Mammary epithelial cell (primary cell): ENCODE measurements at regions of chr4 and their contacts with region 1.

Region 1: GRCh38 chr4:20422398-20422797 is 170.7 kb downstream of the SLIT2 start:
- DNase-seq: peak; percentile 31
- H3K4me3 ChIP-seq: no peak overlapping the region
- H3K27ac ChIP-seq: no peak overlapping the region
- H3K4me1 ChIP-seq: no peaks in the 10 kb centered on the region
- H3K27me3 ChIP-seq: no peaks in the 10 kb centered on the region
- CTCF ChIP-seq: peak; percentile 32 to 63

Region 2: DNA sequence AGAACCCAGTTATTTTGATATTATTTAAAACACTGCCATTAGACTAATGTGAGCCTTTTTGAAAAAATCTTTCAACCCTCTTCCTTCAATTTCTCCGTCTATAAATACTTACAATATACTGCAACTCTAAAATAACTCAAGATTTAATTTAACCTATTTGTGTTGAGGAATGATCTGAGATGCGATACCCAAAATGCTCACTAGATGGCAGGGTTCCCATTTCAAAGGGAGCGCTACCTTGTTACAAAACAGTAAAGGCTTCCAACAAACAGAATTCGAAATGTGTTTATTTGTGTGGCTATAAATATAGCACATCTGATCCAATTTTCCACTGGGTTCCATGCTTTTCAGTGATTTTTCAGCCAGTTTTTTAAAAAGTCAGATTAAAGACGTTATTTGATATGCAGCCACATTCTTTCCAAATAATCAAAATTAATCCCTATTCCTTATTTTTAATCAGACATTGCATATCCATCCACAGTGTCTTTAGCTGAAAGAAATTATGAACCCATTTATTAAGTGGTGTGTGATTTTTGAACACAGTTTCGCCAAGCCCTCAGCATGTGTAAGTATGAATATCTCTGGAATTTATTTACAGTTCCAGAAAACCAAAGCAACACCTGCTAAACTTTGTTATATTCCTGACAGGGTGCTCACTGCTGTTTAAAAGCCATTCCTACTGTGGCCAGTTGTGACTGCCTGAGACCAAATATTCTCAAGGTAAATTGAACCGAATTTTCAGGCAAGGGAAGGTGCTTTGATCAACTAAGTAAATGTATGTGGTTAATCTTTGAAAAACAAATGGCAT is 1732.9 kb before region 1 on chr4:
- CTCF ChIA-PET with region 1: no interaction called
- dilution Hi-C with region 1: no loop called
- in situ Hi-C with region 1: no loop called
- intact Hi-C with region 1: loop called (anchors 10 kb)
- DNase-seq: peak; percentile 28
- H3K4me3 ChIP-seq: no peak overlapping the region
- H3K27ac ChIP-seq: no peak overlapping the region
- H3K4me1 ChIP-seq: no peaks in the 10 kb centered on the region
- H3K27me3 ChIP-seq: no peaks in the 10 kb centered on the region
- CTCF ChIP-seq: peak; percentile 79 to 83

Region 3: GRCh38 chr4:19309378-19309777 is 1113.0 kb before region 1 on chr4:
- CTCF ChIA-PET with region 1: no interaction called
- dilution Hi-C with region 1: no loop called
- in situ Hi-C with region 1: no loop called
- intact Hi-C with region 1: loop called (anchors 10 kb)
- DNase-seq: peak; percentile 14
- H3K4me3 ChIP-seq: no peak overlapping the region
- H3K27ac ChIP-seq: no peak overlapping the region
- H3K4me1 ChIP-seq: no peaks in the 10 kb centered on the region
- H3K27me3 ChIP-seq: no peaks in the 10 kb centered on the region
- CTCF ChIP-seq: peak; percentile 21 to 61

Region 4: DNA sequence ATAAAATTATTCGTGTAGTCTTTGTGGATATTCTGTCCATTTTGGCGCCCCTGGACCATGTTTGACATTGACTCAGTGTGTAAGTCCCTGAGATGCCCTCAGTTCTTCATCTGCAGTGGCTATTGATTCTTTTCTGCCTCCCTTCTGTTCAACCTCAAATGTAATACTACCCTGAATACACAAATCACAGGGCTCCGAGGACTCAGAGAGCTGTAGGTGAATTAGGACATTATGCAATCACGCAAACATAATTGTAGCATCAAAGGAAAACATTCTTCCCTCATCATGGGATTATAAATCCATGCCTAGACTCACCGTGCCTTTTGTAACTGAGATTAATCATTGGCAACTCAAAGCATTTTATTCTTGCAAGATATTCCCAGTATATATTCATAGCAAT is 116.5 kb after region 1 on chr4:
- CTCF ChIA-PET with region 1: no interaction called
- dilution Hi-C with region 1: no loop called
- in situ Hi-C with region 1: loop called in 1 of 2 experiments (anchors 5 kb)
- intact Hi-C with region 1: loop called (anchors 1 kb)
- DNase-seq: no peak
- H3K4me3 ChIP-seq: no peak overlapping the region
- H3K27ac ChIP-seq: no peak overlapping the region
- H3K4me1 ChIP-seq: no peaks in the 10 kb centered on the region
- H3K27me3 ChIP-seq: no peaks in the 10 kb centered on the region
- CTCF ChIP-seq: no peak

Region 5: GRCh38 chr4:20544645-20545044 is 122.2 kb after region 1 on chr4:
- CTCF ChIA-PET with region 1: no interaction called
- dilution Hi-C with region 1: no loop called
- in situ Hi-C with region 1: loop called (anchors 5 kb)
- intact Hi-C with region 1: loop called (anchors 1 kb)
- DNase-seq: peak; percentile 13
- H3K4me3 ChIP-seq: no peak overlapping the region
- H3K27ac ChIP-seq: no peak overlapping the region
- H3K4me1 ChIP-seq: no peaks in the 10 kb centered on the region
- H3K27me3 ChIP-seq: no peaks in the 10 kb centered on the region
- CTCF ChIP-seq: peak; percentile 47 to 70

Region 6: GRCh38 chr4:20684852-20685763 is 262.7 kb after region 1 on chr4:
- CTCF ChIA-PET with region 1: no interaction called
- dilution Hi-C with region 1: loop called (anchors 25 kb)
- in situ Hi-C with region 1: loop called (anchors 5 kb)
- intact Hi-C with region 1: loop called (anchors 1 kb)
- DNase-seq: no peak
- H3K4me3 ChIP-seq: no peak overlapping the region
- H3K27ac ChIP-seq: no peak overlapping the region
- H3K4me1 ChIP-seq: no peaks in the 10 kb centered on the region
- H3K27me3 ChIP-seq: no peaks in the 10 kb centered on the region
- CTCF ChIP-seq: peak; percentile 41 to 54

Region 7: DNA sequence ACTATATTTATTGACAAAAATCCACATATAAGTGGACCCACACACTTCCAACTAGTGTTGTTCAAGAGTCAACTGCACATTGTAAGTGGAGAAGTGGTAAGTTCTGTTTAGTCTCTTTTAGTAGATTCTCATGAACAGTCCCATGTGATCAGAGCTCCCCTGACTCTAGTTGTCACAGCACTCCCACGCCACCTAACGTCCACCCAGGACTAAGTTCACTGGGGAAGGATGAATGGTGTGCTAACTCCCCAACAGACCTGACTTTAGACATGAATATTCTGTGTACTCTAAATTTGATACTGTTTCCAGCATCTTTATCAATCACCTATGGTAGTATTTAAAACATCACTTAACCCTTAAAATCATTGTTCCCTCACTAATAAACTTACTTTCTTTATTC is 337.7 kb after region 1 on chr4:
- CTCF ChIA-PET with region 1: interaction called, 4 read pairs
- dilution Hi-C with region 1: no loop called
- in situ Hi-C with region 1: no loop called
- intact Hi-C with region 1: loop called (anchors 5 kb)
- DNase-seq: no peak
- H3K4me3 ChIP-seq: no peak overlapping the region
- H3K27ac ChIP-seq: no peak overlapping the region
- H3K4me1 ChIP-seq: no peaks in the 10 kb centered on the region
- H3K27me3 ChIP-seq: no peaks in the 10 kb centered on the region
- CTCF ChIP-seq: no peak